Dorsolateral prefrontal cortex (tissue), 120 donors: ENCODE measurements at regions of chr4 and their contacts with region 1.

Region 1: GRCh38 chr4:76969941-76970529 is 20.5 kb downstream of the SEPTIN11 start:
- DNase-seq: no peak
- H3K4me3 ChIP-seq: no peak overlapping the region
- H3K27ac ChIP-seq: peak overlapping the region in 1 of 59 donors; percentile 4
- H3K27me3 ChIP-seq: no peaks in the 10 kb centered on the region
- CTCF ChIP-seq: no peak

Region 2: DNA sequence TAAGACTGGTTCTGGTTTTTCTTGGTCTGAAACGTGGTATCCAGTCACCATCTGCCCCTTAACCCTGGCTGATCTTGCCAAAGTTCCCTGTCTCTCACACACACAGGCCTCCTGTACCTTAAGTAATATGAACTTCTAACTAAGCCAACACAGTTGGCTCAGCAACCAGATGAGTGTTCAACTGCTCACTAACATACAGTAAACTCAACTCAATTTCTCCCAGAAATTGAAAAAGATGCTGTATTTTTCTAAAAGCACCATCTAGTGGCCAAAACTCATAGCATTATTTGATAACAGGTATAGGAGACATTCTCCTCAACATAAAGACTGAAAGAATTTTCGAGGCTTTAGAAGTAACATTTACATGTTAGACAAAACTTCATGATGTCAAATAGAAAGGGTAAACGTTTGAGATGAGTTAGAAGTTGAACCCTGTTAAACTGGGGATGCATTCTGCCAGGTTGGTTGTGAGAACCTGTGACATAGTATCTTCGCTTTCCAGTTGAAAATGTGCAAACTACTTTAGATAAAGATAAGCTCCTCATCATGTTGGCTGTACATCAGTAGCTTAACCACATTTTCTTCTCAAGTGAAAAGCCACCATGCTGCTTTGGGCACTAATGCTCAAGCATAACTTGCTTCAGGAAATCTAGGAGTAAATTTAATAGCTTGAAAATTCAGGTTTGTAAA is 74.6 kb after region 1 on chr4:
- intact Hi-C with region 1: loop called in 1 of 2 experiments (anchors 5 kb)
- DNase-seq: no peak
- H3K4me3 ChIP-seq: no peak overlapping the region
- H3K27ac ChIP-seq: peak overlapping the region in 6 of 59 donors; percentile 4 to 53 (median 28)
- H3K27me3 ChIP-seq: no peaks in the 10 kb centered on the region
- CTCF ChIP-seq: peak; percentile 43 to 80 (median 64)

Region 3: DNA sequence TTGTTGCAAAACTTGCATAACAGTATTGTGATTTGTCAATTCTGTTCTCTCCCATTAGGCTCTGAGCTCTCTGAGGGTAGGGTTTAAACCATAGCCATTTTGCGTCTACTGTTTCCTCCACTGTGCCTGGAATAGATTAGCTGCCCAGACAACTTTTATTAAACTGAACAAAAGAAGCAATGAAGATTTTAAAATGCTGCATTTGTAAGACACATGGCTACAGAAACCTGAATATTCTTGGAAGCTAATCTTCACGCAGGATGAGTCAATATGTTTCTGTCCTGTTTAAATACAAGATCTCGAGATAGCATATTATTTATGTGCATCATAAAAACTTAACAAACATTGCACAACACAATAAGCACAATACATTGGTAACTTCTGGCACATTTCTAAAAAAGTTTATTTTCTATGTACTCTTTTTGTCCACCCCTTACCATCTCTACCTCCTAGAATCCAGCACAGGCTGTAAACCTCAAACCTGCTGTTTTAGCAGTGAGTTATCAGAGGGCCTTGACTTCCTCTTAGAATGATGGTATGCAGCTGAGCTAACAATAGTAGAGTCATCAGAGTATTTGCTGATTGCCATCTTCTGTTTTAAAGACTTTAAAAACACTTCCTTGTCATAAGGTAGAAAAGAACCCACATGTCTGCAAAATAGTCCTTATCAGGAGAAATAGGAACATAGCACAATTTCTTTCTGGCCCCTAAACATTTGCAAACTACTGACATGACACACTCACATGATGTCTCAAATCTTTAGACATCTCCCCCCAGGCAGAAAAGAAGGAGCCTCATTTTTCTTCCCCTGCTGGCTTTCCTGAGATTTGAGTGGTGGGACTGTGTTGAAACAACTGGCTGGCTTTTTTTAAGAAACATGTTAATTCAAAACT is 176.4 kb after region 1 on chr4:
- intact Hi-C with region 1: no loop called
- DNase-seq: no peak
- H3K4me3 ChIP-seq: no peak overlapping the region
- H3K27ac ChIP-seq: no peak overlapping the region
- H3K27me3 ChIP-seq: no peaks in the 10 kb centered on the region
- CTCF ChIP-seq: no peak